ENCODE measurements at regions of chr15 and their contacts with region 1.

Region 1: DNA sequence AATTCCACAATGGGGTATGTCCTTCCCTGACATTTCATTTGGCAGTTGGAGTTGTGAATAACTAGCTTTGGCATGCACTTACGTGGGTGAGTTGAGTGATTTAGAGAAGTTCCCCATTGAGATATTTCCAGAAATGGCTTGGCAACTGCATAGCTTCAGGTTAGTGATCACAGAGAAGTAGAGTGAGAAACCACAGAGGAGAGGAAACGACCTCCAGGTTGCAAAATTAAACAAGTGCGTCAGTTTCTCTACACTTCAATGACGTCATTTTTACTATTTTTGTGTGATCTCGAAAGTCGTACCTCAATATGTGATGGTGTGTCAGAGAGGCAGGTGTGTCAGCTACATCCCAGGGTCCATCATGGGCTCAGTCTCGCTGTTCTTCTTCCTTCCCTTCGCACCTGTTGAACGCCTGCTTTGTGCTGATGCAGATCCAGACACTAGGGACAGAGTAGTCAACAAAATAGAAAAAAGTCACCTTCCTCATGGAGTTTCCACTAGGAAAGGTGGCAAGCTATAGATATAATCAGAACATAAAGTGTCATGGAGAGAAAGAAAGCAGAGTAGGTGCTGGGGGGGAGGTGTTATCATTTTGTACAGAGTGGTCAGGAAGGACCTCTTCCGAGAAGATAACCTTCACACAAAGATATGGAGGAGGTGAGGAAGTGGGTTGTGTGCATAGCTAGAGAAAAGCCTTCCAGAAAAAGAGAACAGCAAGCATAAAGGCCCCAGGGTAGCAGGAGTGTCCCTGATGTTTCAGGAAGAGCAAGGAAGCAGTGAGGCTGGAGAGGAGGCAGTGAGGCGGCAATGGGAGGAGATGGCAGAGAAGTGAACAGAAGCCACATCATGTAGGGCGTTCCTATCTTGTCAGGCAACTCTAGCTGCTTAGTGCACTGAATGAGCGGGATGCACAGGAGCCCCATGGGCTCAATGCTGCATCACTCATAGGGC is 75.6 kb downstream of the MCTP2 start:
- DNase-seq: no peak
- ATAC-seq: no peak
- H3K4me3 ChIP-seq: no peak overlapping the region
- H3K27ac ChIP-seq: no peak overlapping the region
- H3K4me1 ChIP-seq: no peaks in the 10 kb centered on the region
- H3K27me3 ChIP-seq: peaks cover 0 to 4% (median 0%) of the 10 kb centered on the region in 9 donors
- CTCF ChIP-seq: no peak
- POLR2A ChIP-seq: no peak

Region 2: DNA sequence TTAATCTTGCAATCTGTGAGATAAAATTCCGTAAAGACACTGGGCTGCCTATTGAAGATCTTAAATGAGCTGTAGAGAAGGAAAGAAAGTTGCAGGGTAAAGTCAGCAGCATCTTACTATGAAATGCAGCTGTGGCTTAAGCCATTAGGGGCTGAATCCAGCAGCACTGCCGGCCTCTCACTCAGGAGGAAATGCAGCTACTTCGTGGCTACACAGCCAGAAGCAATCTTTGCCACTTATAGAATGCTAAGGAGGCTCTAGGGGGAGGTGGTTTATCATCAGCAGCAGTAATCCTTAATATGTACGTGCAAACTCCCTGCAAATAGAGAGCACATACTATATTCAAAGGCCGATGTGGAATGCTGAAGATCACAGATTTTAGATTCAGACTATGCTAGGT is 94.7 kb before region 1 on chr15:
- intact Hi-C with region 1: no loop called
- DNase-seq: no peak
- ATAC-seq: no peak
- H3K4me3 ChIP-seq: no peak overlapping the region
- H3K27ac ChIP-seq: no peak overlapping the region
- H3K4me1 ChIP-seq: no peaks in the 10 kb centered on the region
- H3K27me3 ChIP-seq: peaks cover 0 to 6% (median 0%) of the 10 kb centered on the region in 9 donors
- CTCF ChIP-seq: no peak
- POLR2A ChIP-seq: no peak

Region 3: DNA sequence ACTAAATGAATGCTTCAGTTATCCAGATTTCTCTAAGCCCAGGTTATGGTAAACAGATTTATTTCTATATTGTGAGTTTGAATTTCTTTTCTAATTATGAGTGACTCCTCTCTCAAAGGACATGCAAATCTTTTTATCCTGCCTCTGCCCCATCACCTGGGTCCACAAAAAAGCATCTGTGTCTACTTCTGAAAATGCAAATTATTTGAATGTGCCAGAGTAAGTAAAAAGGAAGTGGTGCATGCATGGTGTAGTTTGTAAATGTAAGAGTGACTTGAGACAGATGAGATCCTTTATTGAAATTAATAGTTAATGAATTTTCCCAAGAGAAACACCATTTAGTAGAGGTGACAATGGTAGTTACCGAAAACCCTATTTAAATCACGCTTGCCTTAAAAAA is 48.7 kb before region 1 on chr15:
- intact Hi-C with region 1: loop called in 1 of 10 experiments (anchors 10 kb)
- DNase-seq: no peak
- ATAC-seq: no peak
- H3K4me3 ChIP-seq: no peak overlapping the region
- H3K27ac ChIP-seq: no peak overlapping the region
- H3K4me1 ChIP-seq: peaks cover 0 to 28% (median 0%) of the 10 kb centered on the region in 12 donors
- H3K27me3 ChIP-seq: no peaks in the 10 kb centered on the region
- CTCF ChIP-seq: no peak
- POLR2A ChIP-seq: no peak

Region 4: GRCh38 chr15:94370206-94370935 is 63.4 kb after region 1 on chr15:
- intact Hi-C with region 1: no loop called
- DNase-seq: no peak
- ATAC-seq: no peak
- H3K4me3 ChIP-seq: no peak overlapping the region
- H3K27ac ChIP-seq: peak overlapping the region in 1 of 12 donors; percentile 58
- H3K4me1 ChIP-seq: peaks cover 0 to 15% (median 0%) of the 10 kb centered on the region in 12 donors
- H3K27me3 ChIP-seq: peaks cover 0 to 33% (median 0%) of the 10 kb centered on the region in 9 donors
- CTCF ChIP-seq: no peak
- POLR2A ChIP-seq: no peak

Measured in heart left ventricle (tissue), 16 donors.